ENCODE measurements at regions of chr7 and their contacts with region 1.

Region 1: DNA sequence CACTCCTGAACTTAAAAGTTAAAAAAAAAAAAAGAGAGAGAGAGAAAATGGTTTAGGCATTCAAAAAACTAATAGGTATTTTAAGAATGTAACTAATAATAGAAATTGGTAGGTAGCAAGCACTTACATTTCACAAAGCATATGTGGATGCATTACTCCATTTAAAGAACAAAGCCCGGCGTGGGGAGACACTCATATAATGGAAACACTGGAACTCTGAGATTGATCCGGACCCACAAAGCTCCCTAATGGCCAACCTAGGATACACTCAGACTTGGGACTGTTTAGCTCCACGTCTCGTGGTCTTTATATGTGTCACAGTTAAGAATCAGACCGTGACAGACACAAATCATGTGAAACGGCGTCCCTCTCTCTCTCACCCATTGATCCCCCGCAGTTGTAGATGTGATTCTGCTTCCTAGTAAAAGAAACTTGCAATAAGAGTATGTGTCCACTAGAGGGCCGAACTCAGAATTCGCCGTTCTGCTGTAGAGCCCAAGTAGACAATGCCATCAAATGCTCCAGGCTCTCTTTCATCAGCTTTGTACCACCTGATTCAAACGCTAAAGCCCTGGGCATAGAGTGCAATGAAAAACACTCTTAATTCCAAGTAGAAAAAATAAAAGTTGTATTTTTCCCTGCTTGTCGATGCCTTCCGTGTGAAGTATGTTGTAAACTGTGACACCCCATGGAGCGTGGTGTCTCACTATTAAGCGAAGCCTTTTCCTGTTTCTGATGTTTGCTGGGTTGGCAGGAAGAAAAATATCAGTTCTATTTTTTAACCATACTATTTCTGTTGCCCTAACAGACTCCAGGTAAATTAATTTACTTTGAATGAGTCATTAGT is 429.0 kb upstream of the MTPN start:
- H3K4me3 Mint-ChIP-seq: no peak overlapping the region
- H3K27ac Mint-ChIP-seq: no peak overlapping the region
- H3K4me1 Mint-ChIP-seq: no peaks in the 10 kb centered on the region
- H3K27me3 Mint-ChIP-seq: no peaks in the 10 kb centered on the region

Region 2: GRCh38 chr7:137592232-137592896 is 1186.2 kb after region 1 on chr7:
- intact Hi-C with region 1: loop called (anchors 5 kb)
- H3K4me3 Mint-ChIP-seq: no peak overlapping the region
- H3K27ac Mint-ChIP-seq: no peak overlapping the region
- H3K4me1 Mint-ChIP-seq: no peaks in the 10 kb centered on the region
- H3K27me3 Mint-ChIP-seq: no peaks in the 10 kb centered on the region

Measured in dendritic cell treated with granulocyte-macrophage colony-stimulating factor and Interleukin-4, amounts not matched to agents 40 ng/mL and 50 ng/mL, for 4 days (primary cell).